ENCODE measurements at regions of chr6 and their contacts with region 1.

Region 1: DNA sequence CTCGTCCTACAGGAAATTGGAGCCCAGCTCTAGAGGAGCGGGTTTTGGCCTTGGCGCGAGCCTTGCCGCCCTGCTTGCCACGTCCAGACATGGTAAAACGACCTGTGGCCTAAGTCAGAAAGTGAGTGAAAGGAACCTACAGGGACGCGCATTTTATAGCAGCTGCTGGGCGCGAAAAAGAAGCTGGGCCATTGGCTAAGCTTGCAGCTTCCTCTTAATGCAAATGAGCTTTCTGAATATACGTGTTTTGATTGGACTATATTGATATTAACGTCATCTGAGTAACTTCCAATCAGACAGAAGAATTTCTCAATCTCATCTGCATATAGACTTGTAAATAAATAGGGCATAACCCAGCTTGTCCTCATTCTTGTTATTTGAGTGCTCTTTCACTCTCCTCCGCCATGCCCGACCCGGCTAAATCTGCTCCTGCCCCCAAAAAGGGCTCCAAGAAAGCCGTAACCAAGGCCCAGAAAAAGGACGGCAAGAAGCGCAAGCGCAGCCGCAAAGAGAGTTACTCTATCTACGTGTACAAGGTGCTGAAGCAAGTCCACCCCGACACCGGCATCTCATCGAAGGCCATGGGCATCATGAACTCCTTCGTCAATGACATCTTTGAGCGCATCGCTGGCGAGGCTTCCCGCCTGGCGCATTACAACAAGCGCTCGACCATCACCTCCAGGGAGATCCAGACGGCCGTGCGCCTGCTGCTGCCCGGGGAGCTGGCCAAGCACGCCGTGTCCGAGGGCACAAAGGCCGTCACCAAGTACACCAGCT is 18.9 kb downstream of the OR2B2 start:
- DNase-seq: peak; percentile 96
- H3K4me3 Mint-ChIP-seq: no peak overlapping the region
- H3K27ac Mint-ChIP-seq: no peak overlapping the region
- H3K4me1 Mint-ChIP-seq: peaks cover 50% of the 10 kb centered on the region
- H3K27me3 Mint-ChIP-seq: no peaks in the 10 kb centered on the region

Region 2: DNA sequence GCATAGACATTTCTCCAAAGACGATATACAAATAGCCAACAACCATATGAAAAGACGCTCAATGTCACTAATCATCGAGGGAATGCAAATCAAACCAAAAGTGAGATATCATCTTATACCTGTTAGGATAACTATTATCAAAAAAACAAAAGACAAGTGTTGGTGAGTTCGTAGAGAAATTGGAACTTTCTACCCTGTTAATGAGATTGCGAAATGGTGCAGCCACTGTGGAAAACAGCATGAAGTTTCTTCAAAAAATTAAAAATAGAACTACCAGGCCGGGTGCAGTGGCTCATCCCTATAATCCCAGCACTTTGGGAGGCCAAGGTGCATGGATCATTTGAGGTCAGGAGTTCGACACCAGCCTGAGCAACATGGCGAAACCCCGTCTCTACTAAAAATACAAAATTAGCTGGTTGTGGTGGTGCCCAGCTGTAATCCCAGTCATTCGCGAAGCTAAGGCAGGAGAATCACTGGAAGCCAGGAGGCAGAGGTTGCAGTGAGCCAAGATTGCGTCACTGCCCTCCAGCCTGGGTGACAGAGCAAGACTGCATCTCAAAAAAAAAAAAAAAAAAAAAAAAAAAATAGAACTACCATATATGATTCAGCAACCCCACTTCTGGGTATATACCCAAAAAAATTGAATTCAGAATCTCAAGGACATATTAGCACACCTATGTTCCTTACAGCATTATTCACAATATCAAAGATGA is 250.3 kb before region 1 on chr6:
- CTCF ChIA-PET with region 1: no interaction called
- DNase-seq: no peak
- H3K4me3 Mint-ChIP-seq: no peak overlapping the region
- H3K27ac Mint-ChIP-seq: no peak overlapping the region
- H3K4me1 Mint-ChIP-seq: no peaks in the 10 kb centered on the region
- H3K27me3 Mint-ChIP-seq: peaks cover 16% of the 10 kb centered on the region

Region 3: GRCh38 chr6:27761391-27761790 is 131.9 kb before region 1 on chr6:
- CTCF ChIA-PET with region 1: no interaction called
- DNase-seq: no peak
- H3K4me3 Mint-ChIP-seq: no peak overlapping the region
- H3K27ac Mint-ChIP-seq: no peak overlapping the region
- H3K4me1 Mint-ChIP-seq: peaks cover 30% of the 10 kb centered on the region
- H3K27me3 Mint-ChIP-seq: peaks cover 8% of the 10 kb centered on the region

Region 4: GRCh38 chr6:27772261-27773001 is 120.8 kb before region 1 on chr6:
- CTCF ChIA-PET with region 1: interaction called, 12 read pairs
- DNase-seq: peak; percentile 92
- H3K4me3 Mint-ChIP-seq: no peak overlapping the region
- H3K27ac Mint-ChIP-seq: no peak overlapping the region
- H3K4me1 Mint-ChIP-seq: peaks cover 17% of the 10 kb centered on the region
- H3K27me3 Mint-ChIP-seq: peaks cover 37% of the 10 kb centered on the region

Region 5: GRCh38 chr6:27814660-27815424 is 78.4 kb before region 1 on chr6:
- CTCF ChIA-PET with region 1: interaction called, 14 read pairs
- DNase-seq: peak; percentile 88
- H3K4me3 Mint-ChIP-seq: peak overlapping the region; percentile 76
- H3K27ac Mint-ChIP-seq: peak overlapping the region; percentile 99
- H3K4me1 Mint-ChIP-seq: peaks cover 62% of the 10 kb centered on the region
- H3K27me3 Mint-ChIP-seq: peaks cover 4% of the 10 kb centered on the region

Region 6: DNA sequence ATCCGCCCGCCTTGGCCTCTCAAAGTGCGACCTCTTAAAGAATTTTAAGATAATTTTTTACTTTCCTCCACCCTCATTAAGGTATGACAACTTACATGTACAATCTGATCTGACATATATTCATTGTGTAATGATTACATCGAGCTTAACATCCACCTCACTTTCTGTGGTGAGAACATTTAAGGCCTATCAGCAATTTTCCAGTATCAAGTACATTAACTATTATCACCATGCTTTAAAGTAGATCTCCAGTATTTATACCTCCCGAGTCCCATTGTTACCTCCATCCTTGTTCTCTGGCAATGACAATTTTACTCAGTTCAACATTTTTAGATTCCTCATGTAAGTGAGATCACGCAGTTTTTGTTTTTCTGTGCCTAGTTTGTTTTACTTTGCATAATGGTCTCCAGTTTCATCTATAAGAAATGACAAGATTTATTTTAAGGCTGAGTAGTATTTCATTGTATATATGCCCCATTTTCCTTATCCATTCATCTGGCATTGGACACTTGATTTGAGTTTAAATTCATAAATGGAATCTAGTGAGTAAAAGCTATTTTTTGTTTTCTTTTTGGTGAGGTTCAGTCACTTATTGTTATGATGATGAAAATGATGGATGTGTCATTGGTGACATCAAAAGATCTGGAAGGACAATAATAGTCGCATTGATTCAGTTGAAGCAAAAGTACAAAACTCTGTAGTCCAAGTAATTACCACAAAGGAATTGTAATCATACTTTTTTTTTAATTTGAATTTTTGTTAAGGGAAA is 68.0 kb before region 1 on chr6:
- CTCF ChIA-PET with region 1: interaction called, 12 read pairs
- DNase-seq: no peak
- H3K4me3 Mint-ChIP-seq: peak overlapping the region; percentile 83
- H3K27ac Mint-ChIP-seq: peak overlapping the region; percentile 99
- H3K4me1 Mint-ChIP-seq: peaks cover 52% of the 10 kb centered on the region
- H3K27me3 Mint-ChIP-seq: no peaks in the 10 kb centered on the region

Region 7: DNA sequence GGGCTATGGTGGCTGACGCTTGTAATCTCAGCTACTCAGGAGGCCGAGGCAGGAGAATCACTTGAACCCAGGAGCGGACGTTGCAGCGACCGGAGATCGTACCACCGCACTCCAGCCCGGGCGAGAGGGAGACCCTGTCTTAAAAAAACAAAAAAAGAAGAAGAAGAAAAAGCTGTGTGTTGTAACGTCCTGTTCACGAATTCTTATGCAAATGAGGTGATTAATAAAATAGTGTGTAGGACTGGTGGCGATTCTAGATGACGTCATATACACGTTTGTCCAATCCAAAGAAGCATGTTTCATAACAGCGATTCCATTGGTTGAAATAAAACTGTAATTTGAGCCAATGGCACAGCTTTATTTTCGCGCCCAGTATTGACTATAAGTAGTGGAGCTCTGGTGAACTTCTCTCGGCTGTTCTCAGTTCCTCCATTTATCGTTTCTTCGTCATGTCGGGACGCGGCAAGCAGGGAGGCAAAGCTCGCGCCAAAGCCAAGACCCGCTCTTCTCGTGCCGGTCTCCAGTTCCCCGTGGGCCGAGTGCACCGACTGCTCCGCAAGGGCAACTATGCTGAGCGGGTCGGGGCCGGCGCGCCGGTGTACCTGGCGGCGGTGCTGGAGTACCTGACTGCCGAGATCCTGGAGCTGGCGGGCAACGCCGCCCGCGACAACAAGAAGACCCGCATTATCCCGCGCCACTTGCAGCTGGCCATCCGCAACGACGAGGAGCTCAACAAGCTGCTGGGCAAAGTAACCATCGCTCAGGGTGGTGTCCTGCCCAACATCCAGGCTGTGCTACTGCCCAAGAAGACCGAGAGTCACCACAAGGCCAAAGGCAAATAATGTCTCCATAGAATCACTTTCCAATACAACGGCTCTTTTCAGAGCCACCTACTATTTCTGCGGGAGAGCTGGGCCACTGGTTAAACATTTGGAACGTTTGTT is 28.1 kb before region 1 on chr6:
- CTCF ChIA-PET with region 1: interaction called, 47 read pairs
- DNase-seq: peak; percentile 86
- H3K4me3 Mint-ChIP-seq: peak overlapping the region; percentile 99
- H3K27ac Mint-ChIP-seq: peak overlapping the region; percentile 100
- H3K4me1 Mint-ChIP-seq: peaks cover 59% of the 10 kb centered on the region
- H3K27me3 Mint-ChIP-seq: peaks cover 11% of the 10 kb centered on the region

Region 8: GRCh38 chr6:27922949-27923348 is 29.7 kb after region 1 on chr6:
- CTCF ChIA-PET with region 1: no interaction called
- DNase-seq: no peak
- H3K4me3 Mint-ChIP-seq: no peak overlapping the region
- H3K27ac Mint-ChIP-seq: no peak overlapping the region
- H3K4me1 Mint-ChIP-seq: no peaks in the 10 kb centered on the region
- H3K27me3 Mint-ChIP-seq: peaks cover 16% of the 10 kb centered on the region

Region 9: DNA sequence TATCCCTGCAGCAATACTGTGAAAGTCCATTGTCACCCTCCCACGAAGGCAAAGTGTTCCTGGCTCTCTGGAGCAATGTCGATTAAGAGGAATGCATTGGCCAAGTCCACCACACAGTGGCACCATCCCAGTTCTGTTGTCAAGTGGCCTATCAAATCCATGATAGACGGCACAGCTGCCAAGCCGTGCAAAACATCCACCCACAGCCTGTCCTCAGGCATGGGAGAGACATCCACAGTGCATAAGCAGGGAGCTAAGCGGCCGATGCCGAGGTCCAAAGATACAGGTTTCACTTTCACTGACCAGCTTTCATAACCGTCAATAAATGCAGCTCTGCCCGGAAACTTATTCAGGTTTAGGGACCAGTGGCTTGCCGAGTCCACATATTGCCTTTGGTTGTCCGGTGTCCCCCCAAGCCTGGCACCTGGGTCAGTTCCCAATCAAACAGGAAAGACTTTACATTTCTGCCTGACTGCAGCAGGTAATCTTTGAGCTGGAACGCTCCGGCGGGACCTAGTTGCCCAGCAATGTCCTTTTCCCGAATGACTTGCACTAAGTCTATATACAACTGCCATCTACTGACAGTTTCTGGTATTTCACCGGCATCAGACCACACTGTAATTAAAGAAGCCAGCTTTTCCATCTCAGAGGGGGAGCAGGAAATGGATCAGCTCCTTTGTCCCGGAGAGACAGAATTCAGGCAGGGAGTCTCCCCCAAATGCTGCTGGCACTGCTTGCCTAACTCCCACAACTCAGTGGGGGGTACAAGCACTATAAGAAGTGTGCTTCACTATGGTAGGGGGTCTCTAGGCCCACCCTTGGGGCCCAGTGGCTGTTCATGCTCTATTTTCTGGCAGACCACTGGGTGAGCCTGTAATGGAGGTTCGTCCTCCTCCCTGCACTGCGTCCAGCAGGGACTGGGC is 462.8 kb after region 1 on chr6:
- CTCF ChIA-PET with region 1: interaction called, 16 read pairs
- DNase-seq: peak; percentile 72
- H3K4me3 Mint-ChIP-seq: peak overlapping the region; percentile 90
- H3K27ac Mint-ChIP-seq: peak overlapping the region; percentile 86
- H3K4me1 Mint-ChIP-seq: peaks cover 35% of the 10 kb centered on the region
- H3K27me3 Mint-ChIP-seq: peaks cover 4% of the 10 kb centered on the region

Measured in activated naive CD4-positive, alpha-beta T cell treated with anti-CD3 and anti-CD28 coated beads, Interleukin-2, amount 10 ng/mL, durations not matched to agents 7 days and 5 days (primary cell).